Activated CD4-positive, alpha-beta memory T cell treated with anti-CD3 and anti-CD28 coated beads for 36 hours (primary cell): ENCODE measurements at regions of chr3 and their contacts with region 1.

Region 1: GRCh38 chr3:172595641-172596393 is 72.6 kb upstream of the TNFSF10 start:
- DNase-seq: peak; percentile 40
- H3K4me3 Mint-ChIP-seq: peak overlapping the region; percentile 79
- H3K27ac Mint-ChIP-seq: peak overlapping the region; percentile 70
- H3K4me1 Mint-ChIP-seq: peaks cover 53% of the 10 kb centered on the region
- H3K27me3 Mint-ChIP-seq: peaks cover 5% of the 10 kb centered on the region

Region 2: DNA sequence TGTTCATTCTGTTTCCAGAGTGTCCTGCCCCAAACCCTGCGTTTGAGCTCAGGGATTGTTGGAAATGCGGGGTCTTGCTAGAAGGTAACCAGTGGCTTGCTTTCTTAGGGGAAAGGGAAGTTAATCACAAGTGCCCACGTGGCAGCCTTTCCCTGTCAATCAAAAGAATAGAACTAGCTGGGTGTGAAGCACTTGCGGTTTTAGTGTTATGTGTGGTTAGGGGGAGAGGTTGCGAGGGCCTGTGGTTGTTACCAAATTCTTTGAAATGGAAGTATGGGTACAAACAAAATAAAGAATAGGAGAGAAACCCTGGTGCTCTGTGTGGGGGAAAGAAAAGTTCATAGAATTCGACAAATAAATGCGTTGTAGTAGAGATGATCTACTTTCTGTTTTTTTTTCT is 488.8 kb before region 1 on chr3:
- CTCF ChIA-PET with region 1: no interaction called
- POLR2A ChIA-PET with region 1: no interaction called
- intact Hi-C with region 1: loop called (anchors 1 kb)
- DNase-seq: peak; percentile 74
- H3K4me3 Mint-ChIP-seq: peak overlapping the region; percentile 59
- H3K27ac Mint-ChIP-seq: peak overlapping the region; percentile 89
- H3K4me1 Mint-ChIP-seq: peaks cover 72% of the 10 kb centered on the region
- H3K27me3 Mint-ChIP-seq: no peaks in the 10 kb centered on the region

Region 3: DNA sequence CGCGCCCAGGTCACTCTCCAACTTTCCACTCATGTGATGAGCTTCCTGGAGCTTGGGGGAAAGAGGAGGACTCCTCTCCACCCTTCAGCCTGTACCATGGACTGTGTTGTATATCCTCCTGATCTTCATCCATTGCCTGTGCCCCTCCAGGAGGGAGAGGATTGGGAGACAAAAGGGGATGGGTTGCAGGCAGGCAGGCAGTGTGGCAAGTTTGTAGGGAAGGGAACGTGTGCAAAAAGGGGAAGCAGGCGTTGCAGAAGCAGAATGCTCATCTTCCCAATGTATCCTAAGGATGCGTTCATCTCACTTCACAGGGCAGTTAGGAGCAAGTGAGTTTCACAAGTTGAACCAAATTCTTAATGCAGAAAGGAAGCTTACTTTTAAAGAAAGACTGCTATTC is 119.5 kb before region 1 on chr3:
- CTCF ChIA-PET with region 1: interaction called, 22 read pairs
- POLR2A ChIA-PET with region 1: no interaction called
- intact Hi-C with region 1: no loop called
- DNase-seq: no peak
- H3K4me3 Mint-ChIP-seq: peak overlapping the region; percentile 30
- H3K27ac Mint-ChIP-seq: no peak overlapping the region
- H3K4me1 Mint-ChIP-seq: peaks cover 17% of the 10 kb centered on the region
- H3K27me3 Mint-ChIP-seq: no peaks in the 10 kb centered on the region

Region 4: DNA sequence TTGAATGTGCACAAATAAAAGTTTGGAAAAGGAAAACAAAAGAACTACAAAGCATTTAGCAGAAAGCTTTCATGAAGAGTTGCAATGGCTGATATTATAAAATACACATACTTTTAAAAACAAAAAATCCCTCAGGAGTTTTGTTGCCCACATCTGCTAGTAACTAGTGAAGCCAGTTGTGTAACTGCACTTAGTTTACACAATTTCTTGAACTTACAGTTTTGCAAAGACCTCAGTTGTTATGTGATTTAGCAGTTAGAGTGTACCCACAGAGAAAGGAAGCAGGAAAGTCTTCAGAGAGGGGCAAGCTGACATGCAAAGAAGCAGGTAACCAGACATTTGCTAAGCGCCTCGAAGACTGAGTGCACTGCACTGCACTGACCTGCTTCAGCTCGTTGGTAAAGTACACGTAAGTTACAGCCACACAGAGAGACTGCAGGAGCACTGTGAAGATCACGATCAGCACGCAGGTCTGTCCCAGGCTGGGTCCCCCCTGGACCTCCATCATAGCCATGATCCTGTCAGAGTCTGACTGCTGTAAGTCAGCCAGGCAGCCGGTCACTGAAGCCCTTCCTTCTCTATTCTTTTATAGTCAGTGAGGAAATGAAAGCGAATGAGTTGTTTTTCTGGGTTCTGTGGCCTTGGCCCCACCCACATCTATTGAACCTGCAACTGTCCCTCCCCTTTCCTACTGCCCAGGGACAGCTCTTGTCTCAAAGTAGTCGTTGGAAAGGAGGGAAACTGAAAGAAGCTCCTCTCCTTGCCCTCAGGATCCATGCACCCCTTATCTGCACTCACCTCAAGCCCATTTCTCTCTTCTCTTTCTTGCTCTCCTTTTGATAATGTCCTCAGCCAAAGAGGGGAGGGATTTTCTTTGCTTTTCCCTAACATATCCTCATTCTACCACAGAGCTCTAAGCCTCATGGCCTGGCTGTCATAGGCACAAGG is 72.7 kb before region 1 on chr3 and contains the start of gene TNFSF10:
- CTCF ChIA-PET with region 1: interaction called, 24 read pairs
- POLR2A ChIA-PET with region 1: interaction called, 10 read pairs
- intact Hi-C with region 1: no loop called
- DNase-seq: peak; percentile 84
- H3K4me3 Mint-ChIP-seq: peak within 1 kb of the TSS; percentile 94
- H3K27ac Mint-ChIP-seq: peak within 1 kb of the TSS; percentile 94
- H3K4me1 Mint-ChIP-seq: peaks cover 48% of the 10 kb centered on the region
- H3K27me3 Mint-ChIP-seq: no peaks in the 10 kb centered on the region
- total RNA-seq, gene TNFSF10: 30.1 to 31.8 TPM

Region 5: GRCh38 chr3:172562871-172563863 is 32.6 kb before region 1 on chr3:
- CTCF ChIA-PET with region 1: interaction called, 21 read pairs
- POLR2A ChIA-PET with region 1: interaction called, 18 read pairs
- intact Hi-C with region 1: loop called (anchors 1 kb)
- DNase-seq: peak; percentile 64
- H3K4me3 Mint-ChIP-seq: peak overlapping the region; percentile 42
- H3K27ac Mint-ChIP-seq: peak overlapping the region; percentile 94
- H3K4me1 Mint-ChIP-seq: peaks cover 33% of the 10 kb centered on the region
- H3K27me3 Mint-ChIP-seq: no peaks in the 10 kb centered on the region

Region 6: DNA sequence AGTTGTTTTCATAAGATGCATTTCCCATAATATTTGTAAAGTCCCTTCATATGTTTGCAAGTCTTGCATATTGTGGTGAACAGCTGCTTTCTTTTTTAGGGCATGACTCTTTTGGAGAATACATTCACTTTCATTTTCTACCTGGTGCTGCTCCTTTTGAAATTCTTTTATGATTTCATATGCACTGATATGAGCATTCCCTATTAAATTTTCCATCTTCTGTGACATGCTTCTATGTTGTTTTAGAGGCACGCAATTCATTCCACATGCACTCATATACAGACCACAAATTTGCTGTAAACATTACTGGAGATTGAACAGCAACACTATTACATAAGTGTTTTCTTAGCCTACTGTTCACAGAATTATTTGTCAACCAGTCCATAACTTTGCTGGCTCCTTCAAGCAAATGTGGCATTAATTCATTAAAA is 20.2 kb after region 1 on chr3:
- CTCF ChIA-PET with region 1: interaction called, 14 read pairs
- POLR2A ChIA-PET with region 1: interaction called, 3 read pairs
- intact Hi-C with region 1: loop called (anchors 2 kb)
- DNase-seq: no peak
- H3K4me3 Mint-ChIP-seq: no peak overlapping the region
- H3K27ac Mint-ChIP-seq: no peak overlapping the region
- H3K4me1 Mint-ChIP-seq: peaks cover 14% of the 10 kb centered on the region
- H3K27me3 Mint-ChIP-seq: no peaks in the 10 kb centered on the region

Region 7: DNA sequence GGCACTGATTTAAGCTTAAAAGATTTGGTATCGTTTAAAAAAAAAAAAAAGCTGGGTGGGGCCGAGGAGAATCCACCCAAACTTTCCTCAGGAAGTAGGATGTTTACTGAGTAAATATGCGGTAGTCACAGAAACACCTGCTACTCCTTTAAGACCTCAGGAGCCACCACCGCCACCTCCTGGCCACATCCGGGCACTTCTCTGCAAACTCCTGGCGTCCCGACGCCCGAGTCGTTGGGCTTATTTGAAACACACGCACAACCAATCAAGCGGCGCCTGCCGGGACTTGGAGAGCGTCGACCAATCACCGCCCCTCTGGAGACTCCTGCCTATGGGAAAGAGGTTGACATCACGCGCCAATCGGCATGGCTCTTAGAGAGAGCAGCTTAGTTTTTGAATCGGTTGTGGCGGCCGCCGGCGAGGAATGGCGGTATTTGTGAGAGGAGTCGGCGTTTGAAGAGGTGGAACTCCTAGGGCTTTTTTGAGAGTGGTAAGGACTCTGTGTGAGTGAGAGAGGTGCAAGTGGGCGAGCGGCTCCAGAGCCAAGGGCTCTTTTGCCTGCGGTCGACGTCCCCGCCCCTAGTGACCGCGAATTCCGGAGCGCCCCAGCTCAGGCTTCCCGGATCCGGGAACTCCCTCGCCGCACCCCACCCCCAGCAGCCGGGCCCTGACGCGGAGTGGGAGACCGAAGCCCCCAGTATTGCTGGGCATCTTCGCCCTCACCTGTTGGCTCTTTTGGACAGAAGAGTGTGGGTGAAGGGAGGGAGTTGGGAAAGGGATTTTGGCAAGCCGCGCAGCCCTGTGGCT is 154.8 kb after region 1 on chr3 and contains the start of gene ECT2:
- CTCF ChIA-PET with region 1: no interaction called
- POLR2A ChIA-PET with region 1: no interaction called
- intact Hi-C with region 1: loop called (anchors 10 kb)
- DNase-seq: peak; percentile 99
- H3K4me3 Mint-ChIP-seq: peak within 1 kb of the TSS; percentile 87
- H3K27ac Mint-ChIP-seq: peak within 1 kb of the TSS; percentile 87
- H3K4me1 Mint-ChIP-seq: peaks cover 22% of the 10 kb centered on the region
- H3K27me3 Mint-ChIP-seq: peaks cover 1% of the 10 kb centered on the region
- total RNA-seq, gene ECT2: 48.2 to 52.8 TPM